ENCODE measurements at regions of chr9 and their contacts with region 1.

Region 1: DNA sequence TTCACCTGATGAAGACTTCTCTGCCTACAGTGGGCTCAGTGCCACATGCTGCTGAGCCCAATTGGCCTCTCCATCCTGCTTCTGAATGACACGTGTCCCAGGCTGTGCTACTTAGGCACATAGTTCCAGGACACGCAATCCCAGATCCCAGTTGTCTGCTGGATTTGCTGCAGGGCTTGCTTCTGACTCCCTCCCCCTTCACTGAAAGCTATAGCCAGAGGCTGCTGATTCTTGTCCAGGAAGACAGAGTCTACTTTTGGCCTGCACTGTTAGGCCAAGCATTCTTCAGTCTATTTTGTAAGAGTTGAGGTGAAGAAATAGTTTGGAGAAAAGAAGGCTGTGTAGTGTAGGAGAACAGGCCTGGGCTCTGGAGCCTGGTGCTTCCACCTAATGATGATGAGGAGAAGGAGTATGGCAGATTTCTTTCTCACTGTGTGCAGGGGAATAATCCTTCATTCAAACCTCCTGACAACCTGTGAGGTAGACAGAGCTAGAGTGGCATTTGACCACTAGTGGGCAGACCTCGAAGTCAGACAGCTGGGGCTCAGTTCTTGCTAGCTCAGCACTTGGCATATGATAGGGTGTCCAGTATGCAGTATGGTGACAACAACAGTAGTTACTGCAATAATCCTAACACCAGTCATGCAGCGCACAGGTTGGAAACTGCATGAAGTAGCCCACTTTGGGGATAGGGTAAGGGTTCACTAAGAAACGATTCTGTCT is 19.5 kb upstream of the ASPN start:
- DNase-seq: peak; percentile 11
- H3K4me3 Mint-ChIP-seq: no peak overlapping the region
- H3K27ac Mint-ChIP-seq: no peak overlapping the region
- H3K4me1 Mint-ChIP-seq: peaks cover 3% of the 10 kb centered on the region
- H3K27me3 Mint-ChIP-seq: no peaks in the 10 kb centered on the region

Region 2: DNA sequence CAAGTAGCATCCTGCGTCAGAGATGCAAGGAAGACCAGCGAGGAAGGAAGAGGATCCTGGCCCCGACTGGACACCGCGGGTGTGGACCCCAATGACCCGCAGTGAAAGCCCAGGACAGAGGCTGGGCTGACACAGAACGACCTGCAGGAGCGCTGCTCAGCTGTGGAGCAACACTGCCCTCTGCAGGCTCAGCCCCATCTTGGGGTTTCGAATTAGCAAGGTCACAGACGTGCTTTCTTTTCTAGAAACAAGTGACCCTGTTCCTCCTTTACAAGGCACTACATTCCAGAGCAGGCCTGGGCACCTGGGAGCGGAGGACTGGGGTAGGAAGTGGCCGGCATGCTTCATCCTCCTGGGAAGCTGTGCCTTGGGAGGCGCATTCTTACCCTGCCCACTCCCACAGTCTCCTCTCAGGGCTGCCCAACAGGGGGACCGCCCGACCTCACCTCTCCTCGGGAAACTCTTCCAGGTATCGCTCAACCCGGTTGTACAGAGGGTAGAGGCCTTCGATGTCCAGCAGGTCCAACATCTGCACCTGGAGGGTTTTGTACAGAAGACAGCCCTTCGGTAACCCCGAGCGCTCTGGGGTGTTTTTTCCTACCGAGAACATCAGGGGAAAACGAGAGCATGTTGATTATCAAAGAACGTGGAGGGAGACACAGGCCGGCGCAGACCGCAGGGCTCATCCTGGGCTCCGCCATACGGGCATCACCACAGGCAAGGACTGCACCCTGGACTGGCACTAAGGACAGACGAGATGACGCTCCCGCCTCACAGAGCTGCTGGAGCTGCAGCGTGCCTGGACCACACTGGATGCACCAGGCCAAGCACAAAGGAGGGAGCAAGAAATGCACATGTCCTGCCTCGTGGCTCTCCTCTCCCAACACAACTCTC is 133.1 kb after region 1 on chr9:
- CTCF ChIA-PET with region 1: no interaction called
- intact Hi-C with region 1: loop called (anchors 5 kb)
- DNase-seq: peak; percentile 78
- H3K4me3 Mint-ChIP-seq: no peak overlapping the region
- H3K27ac Mint-ChIP-seq: no peak overlapping the region
- H3K4me1 Mint-ChIP-seq: no peaks in the 10 kb centered on the region
- H3K27me3 Mint-ChIP-seq: no peaks in the 10 kb centered on the region

Measured in activated naive CD4-positive, alpha-beta T cell treated with anti-CD3 and anti-CD28 coated beads for 36 hours (primary cell).